Gastrocnemius medialis (tissue), 4 donors: ENCODE measurements at regions of chr2 and their contacts with region 1.

Region 1: GRCh38 chr2:204260162-204260877 is 285.0 kb upstream of the PARD3B start:
- DNase-seq: peak; percentile 5 to 35
- ATAC-seq: peak; percentile 41 to 66
- H3K4me3 ChIP-seq: no peak overlapping the region
- H3K27ac ChIP-seq: no peak overlapping the region
- H3K4me1 ChIP-seq: peaks cover 5 to 10% of the 10 kb centered on the region in 2 donors
- H3K27me3 ChIP-seq: no peaks in the 10 kb centered on the region
- CTCF ChIP-seq: peak; percentile 43 to 75 (median 58)
- POLR2A ChIP-seq: no peak

Region 2: GRCh38 chr2:204691911-204692510 is 431.7 kb after region 1 on chr2:
- in situ Hi-C with region 1: no loop called
- intact Hi-C with region 1: loop called (anchors 5 kb)
- DNase-seq: peak; percentile 35 to 53
- ATAC-seq: peak; percentile 97 to 99
- H3K4me3 ChIP-seq: no peak overlapping the region
- H3K27ac ChIP-seq: no peak overlapping the region
- H3K4me1 ChIP-seq: peaks cover 0 to 4% of the 10 kb centered on the region in 2 donors
- H3K27me3 ChIP-seq: no peaks in the 10 kb centered on the region
- CTCF ChIP-seq: peak; percentile 33 to 80 (median 73)
- POLR2A ChIP-seq: no peak